ENCODE measurements at regions of chr2 and their contacts with region 1.

Region 1: GRCh38 chr2:126413079-126413478 is 242.9 kb upstream of the GYPC start:
- DNase-seq: no peak
- H3K4me3 Mint-ChIP-seq: no peak overlapping the region
- H3K27ac Mint-ChIP-seq: no peak overlapping the region
- H3K4me1 Mint-ChIP-seq: peaks cover 20% of the 10 kb centered on the region
- H3K27me3 Mint-ChIP-seq: no peaks in the 10 kb centered on the region

Region 2: DNA sequence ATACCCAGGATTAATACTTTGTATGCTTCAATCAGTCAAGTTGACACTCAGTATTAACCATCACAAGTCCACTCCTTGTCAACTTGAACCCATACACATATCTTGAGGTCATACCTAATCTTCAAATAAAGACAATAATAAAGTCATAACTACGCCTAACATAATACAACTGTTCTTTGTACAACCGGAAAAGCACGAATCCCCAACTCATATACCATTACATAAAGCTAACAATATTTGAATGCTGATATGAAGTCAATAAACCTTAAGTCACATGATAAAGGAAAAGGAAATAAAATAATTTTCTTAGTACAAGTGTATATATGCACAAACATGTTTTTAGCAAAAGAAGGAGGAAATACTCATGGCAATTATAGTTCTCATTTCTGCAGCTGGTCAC is 527.7 kb before region 1 on chr2:
- CTCF ChIA-PET with region 1: no interaction called
- intact Hi-C with region 1: no loop called
- DNase-seq: no peak
- H3K4me3 Mint-ChIP-seq: no peak overlapping the region
- H3K27ac Mint-ChIP-seq: no peak overlapping the region
- H3K4me1 Mint-ChIP-seq: no peaks in the 10 kb centered on the region
- H3K27me3 Mint-ChIP-seq: no peaks in the 10 kb centered on the region

Region 3: GRCh38 chr2:126302043-126302442 is 111.0 kb before region 1 on chr2:
- CTCF ChIA-PET with region 1: no interaction called
- intact Hi-C with region 1: loop called (anchors 1 kb)
- DNase-seq: no peak
- H3K4me3 Mint-ChIP-seq: no peak overlapping the region
- H3K27ac Mint-ChIP-seq: no peak overlapping the region
- H3K4me1 Mint-ChIP-seq: peaks cover 8% of the 10 kb centered on the region
- H3K27me3 Mint-ChIP-seq: peaks cover 11% of the 10 kb centered on the region

Region 4: GRCh38 chr2:126322342-126322741 is 90.7 kb before region 1 on chr2:
- CTCF ChIA-PET with region 1: no interaction called
- intact Hi-C with region 1: loop called (anchors 1 kb)
- DNase-seq: no peak
- H3K4me3 Mint-ChIP-seq: no peak overlapping the region
- H3K27ac Mint-ChIP-seq: no peak overlapping the region
- H3K4me1 Mint-ChIP-seq: peaks cover 5% of the 10 kb centered on the region
- H3K27me3 Mint-ChIP-seq: peaks cover 8% of the 10 kb centered on the region

Region 5: DNA sequence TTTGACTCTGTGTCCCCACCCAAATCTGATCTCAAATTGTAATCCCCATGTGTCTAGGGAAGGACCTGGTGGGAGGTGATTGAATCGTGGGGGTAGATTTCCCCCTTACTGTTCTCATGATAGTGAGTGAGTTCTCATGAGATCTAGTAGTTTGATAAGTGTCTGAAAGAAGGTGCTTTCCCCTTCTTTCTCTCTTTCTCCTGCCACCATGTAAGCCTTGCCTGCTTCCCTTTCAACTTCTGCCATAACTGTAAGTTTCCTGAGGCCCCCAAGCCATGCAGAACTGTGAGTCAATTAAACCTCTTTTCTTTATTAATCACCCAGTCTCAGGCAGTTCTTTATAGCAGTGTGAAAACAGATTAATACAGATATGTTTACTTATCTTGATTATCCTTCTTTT is 23.6 kb before region 1 on chr2:
- CTCF ChIA-PET with region 1: no interaction called
- intact Hi-C with region 1: no loop called
- DNase-seq: no peak
- H3K4me3 Mint-ChIP-seq: no peak overlapping the region
- H3K27ac Mint-ChIP-seq: no peak overlapping the region
- H3K4me1 Mint-ChIP-seq: peaks cover 5% of the 10 kb centered on the region
- H3K27me3 Mint-ChIP-seq: peaks cover 8% of the 10 kb centered on the region

Region 6: GRCh38 chr2:126467367-126468054 is 54.4 kb after region 1 on chr2:
- CTCF ChIA-PET with region 1: no interaction called
- intact Hi-C with region 1: loop called (anchors 1 kb)
- DNase-seq: peak; percentile 26
- H3K4me3 Mint-ChIP-seq: no peak overlapping the region
- H3K27ac Mint-ChIP-seq: no peak overlapping the region
- H3K4me1 Mint-ChIP-seq: no peaks in the 10 kb centered on the region
- H3K27me3 Mint-ChIP-seq: peaks cover 3% of the 10 kb centered on the region

Region 7: GRCh38 chr2:126657636-126658318 is 244.7 kb after region 1 on chr2:
- CTCF ChIA-PET with region 1: no interaction called
- intact Hi-C with region 1: loop called (anchors 1 kb)
- DNase-seq: peak; percentile 87
- H3K4me3 Mint-ChIP-seq: peak overlapping the region; percentile 100
- H3K27ac Mint-ChIP-seq: peak overlapping the region; percentile 100
- H3K4me1 Mint-ChIP-seq: peaks cover 61% of the 10 kb centered on the region
- H3K27me3 Mint-ChIP-seq: no peaks in the 10 kb centered on the region